ENCODE measurements at regions of chrX and their contacts with region 1.

Region 1: DNA sequence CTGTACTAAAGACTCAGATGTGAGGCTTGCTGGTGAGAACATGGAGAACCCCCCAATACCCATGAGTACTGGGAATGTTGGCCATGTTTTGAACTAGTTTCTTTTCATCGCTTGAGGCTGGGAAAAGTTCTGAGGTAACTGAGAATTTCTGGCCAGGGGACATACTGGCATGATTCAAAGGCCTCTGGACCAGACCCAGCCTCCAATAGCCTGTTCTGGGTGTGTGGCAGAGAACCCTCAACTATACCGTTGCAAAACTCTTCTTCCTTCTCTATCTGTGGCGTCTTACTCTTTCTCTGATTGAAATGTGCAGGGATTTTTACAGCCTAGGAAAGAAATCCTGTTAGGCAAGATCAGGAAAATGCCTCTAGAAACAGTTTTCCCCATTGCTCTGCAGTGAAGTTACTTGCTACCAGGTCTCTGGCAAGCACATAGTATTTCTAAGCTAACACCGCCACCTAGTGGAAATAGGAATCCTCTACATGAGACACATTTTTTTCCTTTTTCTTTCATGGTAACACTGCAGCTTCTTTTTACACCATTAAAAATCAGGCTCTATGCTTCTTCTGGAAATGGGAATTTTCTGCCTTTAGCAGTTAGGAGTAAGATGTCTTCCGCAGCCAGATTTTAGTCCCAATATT is 170.7 kb upstream of the ZCCHC13 start:
- DNase-seq: peak in 1 of 2 donors; percentile 13
- ATAC-seq: peak in 7 of 8 donors; percentile 49 to 78 (median 70)
- H3K4me3 ChIP-seq: no peak overlapping the region
- H3K27ac ChIP-seq: no peak overlapping the region
- H3K4me1 ChIP-seq: no peaks in the 10 kb centered on the region
- H3K27me3 ChIP-seq: peaks cover 0 to 25% (median 0%) of the 10 kb centered on the region in 7 donors
- CTCF ChIP-seq: peak; percentile 39 to 85 (median 67)

Region 2: DNA sequence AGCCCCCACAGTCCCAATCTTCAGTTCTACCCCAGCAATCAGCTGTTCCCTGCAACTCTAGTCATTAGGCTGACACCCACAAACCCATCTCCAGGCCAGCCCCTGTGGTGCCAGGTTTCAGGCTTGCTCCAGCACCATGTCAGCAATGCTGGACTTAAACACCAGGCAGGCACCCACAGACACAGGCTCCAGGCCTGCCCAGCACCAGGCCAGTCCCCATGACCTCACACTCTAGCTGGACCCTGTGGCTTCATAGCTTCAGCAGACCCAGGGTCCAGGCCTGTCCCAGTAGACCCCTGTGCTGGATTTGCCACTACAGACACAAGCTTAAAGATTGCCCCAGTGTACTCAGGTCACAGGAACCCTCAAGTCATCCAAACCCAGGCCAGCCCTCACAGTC is 270.0 kb before region 1 on chrX:
- intact Hi-C with region 1: loop called in 6 of 10 experiments (anchors 5 to 10 kb)
- DNase-seq: no peak
- ATAC-seq: no peak
- H3K4me3 ChIP-seq: no peak overlapping the region
- H3K27ac ChIP-seq: no peak overlapping the region
- H3K4me1 ChIP-seq: no peaks in the 10 kb centered on the region
- H3K27me3 ChIP-seq: peaks cover 0 to 40% (median 0%) of the 10 kb centered on the region in 7 donors
- CTCF ChIP-seq: no peak

Region 3: GRCh38 chrX:73963682-73964081 is 169.6 kb before region 1 on chrX:
- intact Hi-C with region 1: no loop called
- DNase-seq: peak; percentile 40 to 55
- ATAC-seq: peak in 7 of 8 donors; percentile 38 to 97 (median 94)
- H3K4me3 ChIP-seq: no peak overlapping the region
- H3K27ac ChIP-seq: peak overlapping the region in 4 of 10 donors; percentile 26 to 62 (median 42)
- H3K4me1 ChIP-seq: peaks cover 0 to 27% (median 4%) of the 10 kb centered on the region in 9 donors
- H3K27me3 ChIP-seq: no peaks in the 10 kb centered on the region
- CTCF ChIP-seq: no peak

Region 4: DNA sequence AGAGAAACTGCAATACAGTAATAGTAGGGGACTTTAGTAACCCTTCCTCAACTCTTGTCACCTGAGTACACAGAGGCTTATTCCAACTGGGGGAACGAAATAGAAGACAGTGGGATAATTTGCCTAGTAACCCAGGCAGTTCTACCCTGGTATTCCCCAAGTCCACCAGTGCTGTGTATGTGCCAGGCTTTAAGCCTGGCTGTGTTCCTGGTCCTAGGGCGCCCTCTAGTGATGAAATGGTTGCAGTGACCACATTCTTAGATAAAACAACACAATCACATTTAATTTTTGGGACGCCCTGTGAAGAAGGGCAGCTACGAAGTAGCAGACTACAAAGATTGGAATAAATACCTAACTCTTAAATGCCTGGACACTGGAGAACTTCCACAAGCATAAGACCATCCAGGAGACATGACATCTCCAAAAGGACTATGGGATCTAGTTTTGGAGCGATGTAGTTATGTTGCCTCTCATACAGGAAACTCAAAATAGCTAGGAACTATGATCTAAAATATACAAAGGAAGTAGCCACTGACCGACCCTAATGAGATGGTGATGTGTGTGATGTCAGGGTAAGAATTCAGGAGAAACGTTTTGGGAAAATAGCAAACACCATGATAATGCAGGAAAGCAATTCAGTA is 117.8 kb before region 1 on chrX:
- intact Hi-C with region 1: loop called in 2 of 10 experiments (anchors 5 to 10 kb)
- DNase-seq: peak in 1 of 2 donors; percentile 31
- ATAC-seq: peak; percentile 46 to 91 (median 72)
- H3K4me3 ChIP-seq: no peak overlapping the region
- H3K27ac ChIP-seq: no peak overlapping the region
- H3K4me1 ChIP-seq: no peaks in the 10 kb centered on the region
- H3K27me3 ChIP-seq: no peaks in the 10 kb centered on the region
- CTCF ChIP-seq: peak; percentile 34 to 89 (median 70)

Region 5: GRCh38 chrX:74179071-74179470 is 45.8 kb after region 1 on chrX:
- intact Hi-C with region 1: no loop called
- DNase-seq: no peak
- ATAC-seq: no peak
- H3K4me3 ChIP-seq: no peak overlapping the region
- H3K27ac ChIP-seq: no peak overlapping the region
- H3K4me1 ChIP-seq: no peaks in the 10 kb centered on the region
- H3K27me3 ChIP-seq: peaks cover 0 to 38% (median 0%) of the 10 kb centered on the region in 7 donors
- CTCF ChIP-seq: no peak